CD8-positive, alpha-beta T cell (primary cell): ENCODE measurements at regions of chr22 and their contacts with region 1.

Region 1: DNA sequence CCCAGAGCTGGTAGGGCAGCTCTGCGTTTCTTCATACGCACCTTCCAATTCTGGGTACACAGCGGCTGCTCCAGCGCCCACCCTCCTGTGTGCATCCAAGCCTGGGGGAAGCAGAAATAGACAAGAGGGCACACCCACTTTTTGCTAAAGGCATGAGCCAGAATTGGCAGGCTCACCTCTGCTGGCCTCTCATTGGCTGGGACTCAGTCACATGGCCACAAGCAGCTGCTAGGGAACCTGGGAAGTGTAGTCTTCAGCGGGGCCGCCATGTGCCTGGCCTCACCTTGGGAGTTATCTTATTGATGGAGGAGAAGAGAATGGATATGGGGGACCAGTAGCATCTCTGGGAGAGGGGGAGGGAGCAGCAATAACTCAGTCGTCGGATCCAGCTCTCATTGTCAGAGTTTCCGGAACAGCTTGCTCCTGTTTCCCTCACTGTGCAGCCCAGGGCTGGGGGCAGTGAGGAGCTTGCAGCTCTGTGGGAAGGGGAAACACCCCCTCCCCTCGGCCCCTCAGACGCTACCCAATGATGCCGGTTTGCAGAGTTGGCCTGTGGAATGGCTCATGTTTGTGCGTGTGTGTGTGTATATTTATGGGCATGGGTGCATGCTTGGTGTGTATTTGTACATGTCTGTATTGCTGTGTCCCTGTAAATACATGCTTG is 11.8 kb upstream of the MIEF1 start:
- DNase-seq: peak; percentile 58 to 89 (median 76)
- ATAC-seq: peak; percentile 99
- H3K4me3 ChIP-seq: no peak overlapping the region
- H3K4me3 Mint-ChIP-seq: peak overlapping the region; percentile 69
- H3K27ac ChIP-seq: no peak overlapping the region
- H3K27ac Mint-ChIP-seq: peak overlapping the region; percentile 67
- H3K4me1 ChIP-seq: peaks cover 7% of the 10 kb centered on the region
- H3K4me1 Mint-ChIP-seq: peaks cover 12% of the 10 kb centered on the region
- H3K27me3 ChIP-seq: no peaks in the 10 kb centered on the region
- H3K27me3 Mint-ChIP-seq: no peaks in the 10 kb centered on the region
- CTCF ChIP-seq: no peak

Region 2: GRCh38 chr22:39343259-39344048 is 146.8 kb before region 1 on chr22:
- CTCF ChIA-PET with region 1: interaction called, 13 read pairs
- POLR2A ChIA-PET with region 1: no interaction called
- intact Hi-C with region 1: no loop called
- DNase-seq: peak; percentile 32 to 76 (median 63)
- ATAC-seq: peak; percentile 91
- H3K4me3 ChIP-seq: no peak overlapping the region
- H3K4me3 Mint-ChIP-seq: no peak overlapping the region
- H3K27ac ChIP-seq: no peak overlapping the region
- H3K27ac Mint-ChIP-seq: no peak overlapping the region
- H3K4me1 ChIP-seq: no peaks in the 10 kb centered on the region
- H3K4me1 Mint-ChIP-seq: peaks cover 4% of the 10 kb centered on the region
- H3K27me3 ChIP-seq: no peaks in the 10 kb centered on the region
- H3K27me3 Mint-ChIP-seq: no peaks in the 10 kb centered on the region
- CTCF ChIP-seq: peak; percentile 60

Region 3: GRCh38 chr22:39403271-39403670 is 87.0 kb before region 1 on chr22:
- CTCF ChIA-PET with region 1: interaction called, 8 read pairs
- POLR2A ChIA-PET with region 1: interaction called, 7 read pairs
- intact Hi-C with region 1: loop called in 1 of 2 experiments (anchors 5 kb)
- DNase-seq: no peak
- ATAC-seq: no peak
- H3K4me3 ChIP-seq: no peak overlapping the region
- H3K4me3 Mint-ChIP-seq: no peak overlapping the region
- H3K27ac ChIP-seq: no peak overlapping the region
- H3K27ac Mint-ChIP-seq: no peak overlapping the region
- H3K4me1 ChIP-seq: peaks cover 43% of the 10 kb centered on the region
- H3K4me1 Mint-ChIP-seq: peaks cover 54% of the 10 kb centered on the region
- H3K27me3 ChIP-seq: no peaks in the 10 kb centered on the region
- H3K27me3 Mint-ChIP-seq: no peaks in the 10 kb centered on the region
- CTCF ChIP-seq: no peak

Region 4: GRCh38 chr22:39439170-39439569 is 51.1 kb before region 1 on chr22:
- CTCF ChIA-PET with region 1: interaction called, 13 read pairs
- POLR2A ChIA-PET with region 1: no interaction called
- intact Hi-C with region 1: no loop called
- DNase-seq: no peak
- ATAC-seq: no peak
- H3K4me3 ChIP-seq: no peak overlapping the region
- H3K4me3 Mint-ChIP-seq: no peak overlapping the region
- H3K27ac ChIP-seq: no peak overlapping the region
- H3K27ac Mint-ChIP-seq: no peak overlapping the region
- H3K4me1 ChIP-seq: peaks cover 17% of the 10 kb centered on the region
- H3K4me1 Mint-ChIP-seq: peaks cover 16% of the 10 kb centered on the region
- H3K27me3 ChIP-seq: peaks cover 0 to 3% of the 10 kb centered on the region in 2 experiments
- H3K27me3 Mint-ChIP-seq: peaks cover 15% of the 10 kb centered on the region
- CTCF ChIP-seq: no peak

Region 5: GRCh38 chr22:39456262-39457197 is 33.7 kb before region 1 on chr22 and contains the start of gene MGAT3:
- CTCF ChIA-PET with region 1: interaction called, 3 read pairs
- POLR2A ChIA-PET with region 1: no interaction called
- intact Hi-C with region 1: loop called in 1 of 2 experiments (anchors 5 kb)
- DNase-seq: peak in 8 of 9 experiments; percentile 26 to 77 (median 48)
- ATAC-seq: peak; percentile 68
- H3K4me3 ChIP-seq: peak within 1 kb of the TSS in 1 of 2 experiments; percentile 41
- H3K4me3 Mint-ChIP-seq: peak within 1 kb of the TSS; percentile 77
- H3K27ac ChIP-seq: no peak within 1 kb of the TSS
- H3K27ac Mint-ChIP-seq: no peak within 1 kb of the TSS
- H3K4me1 ChIP-seq: peaks cover 21% of the 10 kb centered on the region
- H3K4me1 Mint-ChIP-seq: peaks cover 27% of the 10 kb centered on the region
- H3K27me3 ChIP-seq: peaks cover 7 to 19% of the 10 kb centered on the region in 2 experiments
- H3K27me3 Mint-ChIP-seq: peaks cover 27% of the 10 kb centered on the region
- CTCF ChIP-seq: no peak
- total RNA-seq, gene MGAT3: 0.05 TPM in 1 of 2 experiments, not detected in the other

Region 6: DNA sequence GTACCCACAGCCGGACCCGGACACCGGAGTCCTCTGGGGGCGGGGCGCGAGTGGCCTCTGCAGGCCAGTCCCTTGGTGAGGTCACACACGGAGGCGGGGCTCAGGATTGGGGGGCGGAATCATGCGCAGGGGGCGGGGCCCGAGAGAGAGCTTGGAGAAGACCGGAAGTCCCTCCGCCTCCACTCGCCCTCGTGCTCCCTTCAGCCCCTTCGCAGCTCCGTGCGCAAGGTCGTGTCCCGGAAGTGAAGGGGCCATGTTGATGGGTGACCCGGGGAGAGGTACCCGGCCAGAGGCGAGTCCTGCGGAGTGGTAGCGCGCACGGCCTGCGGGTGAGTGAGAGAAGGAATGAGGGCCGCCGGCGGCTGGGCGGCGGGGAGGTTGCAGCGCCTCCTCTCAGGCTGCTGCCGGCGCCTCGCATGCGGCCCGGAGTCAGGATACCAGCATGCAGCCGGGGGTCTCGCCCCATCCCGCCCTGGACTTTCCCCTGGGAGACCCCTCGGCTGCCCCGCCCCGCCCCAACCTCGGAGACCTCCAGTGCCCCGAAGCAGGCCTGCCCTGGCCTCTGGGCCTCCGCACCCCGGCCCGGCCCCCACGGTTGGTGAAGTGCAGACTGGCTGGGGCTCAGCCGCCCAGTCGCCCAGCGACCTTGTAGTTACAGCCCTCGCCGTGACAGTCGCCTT is 12.0 kb after region 1 on chr22 and contains the start of gene MIEF1:
- CTCF ChIA-PET with region 1: interaction called, 20 read pairs
- POLR2A ChIA-PET with region 1: interaction called, 5 read pairs
- intact Hi-C with region 1: no loop called
- DNase-seq: peak; percentile 67 to 96 (median 88)
- ATAC-seq: peak; percentile 94
- H3K4me3 ChIP-seq: peak within 1 kb of the TSS; percentile 66 to 80
- H3K4me3 Mint-ChIP-seq: peak within 1 kb of the TSS; percentile 97
- H3K27ac ChIP-seq: peak within 1 kb of the TSS; percentile 64 to 80
- H3K27ac Mint-ChIP-seq: peak within 1 kb of the TSS; percentile 92
- H3K4me1 ChIP-seq: peaks cover 30% of the 10 kb centered on the region
- H3K4me1 Mint-ChIP-seq: peaks cover 41% of the 10 kb centered on the region
- H3K27me3 ChIP-seq: no peaks in the 10 kb centered on the region
- H3K27me3 Mint-ChIP-seq: no peaks in the 10 kb centered on the region
- CTCF ChIP-seq: no peak
- total RNA-seq, gene MIEF1: 24.8 to 25.3 TPM

Region 7: DNA sequence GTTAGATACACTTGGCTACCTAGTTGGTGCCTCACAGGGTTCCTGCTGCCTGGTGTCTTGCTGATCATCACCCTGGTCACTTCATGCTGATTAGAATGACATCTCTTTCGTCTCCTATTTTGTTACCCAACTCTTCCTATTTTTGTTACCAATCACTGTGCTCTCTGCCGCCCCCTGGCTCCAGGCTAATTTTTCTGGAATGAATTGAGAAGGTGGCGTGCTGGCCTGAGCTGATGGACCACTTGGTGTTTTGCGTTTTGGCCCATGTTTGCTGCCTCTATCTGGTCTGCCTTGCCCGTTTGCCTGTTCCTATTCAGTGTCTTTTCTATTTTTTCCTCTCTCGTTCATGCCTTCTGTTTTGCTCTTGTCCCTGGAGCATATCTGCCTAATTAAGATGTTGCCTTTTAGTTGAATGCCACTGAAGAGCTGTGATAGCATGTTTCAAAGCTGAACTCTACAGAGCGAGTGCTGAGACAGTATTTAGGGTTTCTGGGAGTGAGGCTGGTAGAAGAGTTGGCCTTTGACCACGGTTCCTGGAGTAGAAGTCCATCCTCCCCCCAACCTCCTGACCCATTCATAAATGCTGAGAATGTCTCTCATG is 24.2 kb after region 1 on chr22:
- CTCF ChIA-PET with region 1: interaction called, 30 read pairs
- POLR2A ChIA-PET with region 1: interaction called, 15 read pairs
- intact Hi-C with region 1: loop called in 1 of 2 experiments (anchors 2 kb)
- DNase-seq: peak in 6 of 9 experiments; percentile 36 to 61 (median 54)
- ATAC-seq: peak; percentile 55
- H3K4me3 ChIP-seq: no peak overlapping the region
- H3K4me3 Mint-ChIP-seq: no peak overlapping the region
- H3K27ac ChIP-seq: no peak overlapping the region
- H3K27ac Mint-ChIP-seq: no peak overlapping the region
- H3K4me1 ChIP-seq: peaks cover 8% of the 10 kb centered on the region
- H3K4me1 Mint-ChIP-seq: peaks cover 20% of the 10 kb centered on the region
- H3K27me3 ChIP-seq: no peaks in the 10 kb centered on the region
- H3K27me3 Mint-ChIP-seq: no peaks in the 10 kb centered on the region
- CTCF ChIP-seq: peak; percentile 67

Region 8: DNA sequence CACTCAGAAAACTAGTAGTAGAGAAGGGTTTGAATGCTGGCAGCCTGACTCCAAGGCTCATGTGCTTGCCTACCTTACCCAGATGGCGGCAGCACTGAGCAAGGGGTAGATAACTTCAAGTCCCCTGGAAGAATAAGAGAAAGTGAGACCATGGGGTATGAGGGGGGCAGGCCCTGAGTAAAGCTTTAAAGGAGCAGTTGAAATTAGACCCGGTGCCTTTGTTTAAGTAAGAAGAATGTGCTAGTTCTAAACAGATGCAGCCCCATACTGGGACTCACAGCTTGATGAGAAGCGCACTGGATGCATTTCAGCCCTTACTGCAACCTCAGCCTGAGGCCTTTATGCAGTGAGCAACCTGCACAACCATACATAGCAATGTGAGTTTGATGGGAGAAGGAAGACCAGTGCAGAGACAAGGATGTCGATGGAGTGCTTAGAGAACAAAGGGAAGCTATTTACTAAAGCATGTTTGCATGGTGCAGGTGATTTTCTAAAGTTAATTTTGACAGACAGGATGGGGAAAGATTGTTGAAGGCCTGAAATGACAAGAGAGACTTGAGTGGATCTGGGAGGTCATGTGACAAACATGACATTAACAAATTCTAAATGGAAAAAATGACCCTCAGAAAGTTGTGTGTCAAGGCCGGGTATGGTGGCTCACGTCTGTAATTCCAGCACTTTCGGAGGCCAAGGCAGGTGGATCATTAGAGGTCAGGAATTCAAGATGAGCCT is 442.8 kb after region 1 on chr22:
- CTCF ChIA-PET with region 1: no interaction called
- POLR2A ChIA-PET with region 1: no interaction called
- intact Hi-C with region 1: no loop called
- DNase-seq: peak in 7 of 9 experiments; percentile 27 to 85 (median 72)
- ATAC-seq: peak; percentile 66
- H3K4me3 ChIP-seq: peak overlapping the region in 1 of 2 experiments; percentile 35
- H3K4me3 Mint-ChIP-seq: peak overlapping the region; percentile 77
- H3K27ac ChIP-seq: peak overlapping the region; percentile 72
- H3K27ac Mint-ChIP-seq: no peak overlapping the region
- H3K4me1 ChIP-seq: peaks cover 98% of the 10 kb centered on the region
- H3K4me1 Mint-ChIP-seq: peaks cover 54% of the 10 kb centered on the region
- H3K27me3 ChIP-seq: no peaks in the 10 kb centered on the region
- H3K27me3 Mint-ChIP-seq: no peaks in the 10 kb centered on the region
- CTCF ChIP-seq: peak; percentile 62